GM12878 (cell line): ENCODE measurements at regions of chr6 and their contacts with region 1.

Region 1: GRCh38 chr6:170476360-170476759 is 76.7 kb downstream of the PSMB1 start:
- DNase-seq: peak; percentile 40
- ATAC-seq: peak; percentile 92
- H3K4me3 ChIP-seq: no peak overlapping the region
- H3K27ac ChIP-seq: no peak overlapping the region
- H3K4me1 ChIP-seq: no peaks in the 10 kb centered on the region
- H3K27me3 ChIP-seq: no peaks in the 10 kb centered on the region; a peak in 1 of 4 replicates
- CTCF ChIP-seq: no peak
- EP300 ChIP-seq: peak; percentile 36 to 53; a peak in 2 of 4 replicates
- POLR2A ChIP-seq: no peak
- RAD21 ChIP-seq: no peak

Region 2: DNA sequence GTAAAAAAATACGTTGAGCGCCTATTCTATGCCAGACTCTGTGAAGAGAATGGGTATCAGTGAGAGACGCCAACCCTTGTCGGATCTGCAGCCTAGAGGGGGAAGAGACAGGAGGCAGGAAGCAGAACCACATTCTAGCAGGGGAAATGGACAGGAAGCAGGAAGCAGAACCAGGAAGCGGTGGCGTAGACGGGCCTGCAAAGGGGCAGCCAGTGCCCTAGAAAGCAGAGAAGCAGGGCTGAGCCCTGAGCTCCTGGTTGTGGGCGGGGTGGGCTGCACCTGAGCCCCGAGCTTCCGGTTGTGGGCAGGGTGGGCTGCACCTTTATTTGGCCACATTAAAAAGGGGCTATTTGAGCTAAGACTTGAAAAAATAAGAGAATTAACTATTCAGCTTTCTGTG is 97.9 kb before region 1 on chr6:
- CTCF ChIA-PET with region 1: no interaction called
- POLR2A ChIA-PET with region 1: no interaction called
- RAD21 ChIA-PET with region 1: no interaction called
- SMC1A ChIA-PET with region 1: no interaction called
- in situ Hi-C with region 1: no loop called
- intact Hi-C with region 1: no loop called
- DNase-seq: no peak
- ATAC-seq: no peak
- H3K4me3 ChIP-seq: no peak overlapping the region
- H3K27ac ChIP-seq: no peak overlapping the region
- H3K4me1 ChIP-seq: no peaks in the 10 kb centered on the region
- H3K27me3 ChIP-seq: no peaks in the 10 kb centered on the region
- CTCF ChIP-seq: no peak
- EP300 ChIP-seq: no peak
- POLR2A ChIP-seq: no peak
- RAD21 ChIP-seq: no peak

Region 3: GRCh38 chr6:170443151-170443662 is 33.2 kb before region 1 on chr6:
- CTCF ChIA-PET with region 1: no interaction called
- POLR2A ChIA-PET with region 1: no interaction called
- RAD21 ChIA-PET with region 1: no interaction called
- SMC1A ChIA-PET with region 1: no interaction called
- in situ Hi-C with region 1: no loop called
- intact Hi-C with region 1: no loop called
- DNase-seq: no peak
- ATAC-seq: no peak
- H3K4me3 ChIP-seq: no peak overlapping the region
- H3K27ac ChIP-seq: no peak overlapping the region
- H3K4me1 ChIP-seq: no peaks in the 10 kb centered on the region; the same call in 1 of the 2 replicates
- H3K27me3 ChIP-seq: no peaks in the 10 kb centered on the region
- CTCF ChIP-seq: 0 out of 6 replicates have a peak, but pooled peaks of 1 of the 3 experiments have one; percentile 4
- EP300 ChIP-seq: no peak
- POLR2A ChIP-seq: no peak
- RAD21 ChIP-seq: no peak

Region 4: GRCh38 chr6:170464524-170464979 is 11.8 kb before region 1 on chr6:
- CTCF ChIA-PET with region 1: interaction called, 37 read pairs
- POLR2A ChIA-PET with region 1: interaction called, 20 read pairs
- RAD21 ChIA-PET with region 1: interaction called, 30 read pairs
- SMC1A ChIA-PET with region 1: interaction called, 18 read pairs
- in situ Hi-C with region 1: no loop called
- intact Hi-C with region 1: no loop called
- DNase-seq: peak; percentile 30
- ATAC-seq: peak; percentile 80
- H3K4me3 ChIP-seq: no peak overlapping the region
- H3K27ac ChIP-seq: no peak overlapping the region
- H3K4me1 ChIP-seq: peaks cover 14% of the 10 kb centered on the region
- H3K27me3 ChIP-seq: no peaks in the 10 kb centered on the region
- CTCF ChIP-seq: no peak
- EP300 ChIP-seq: peak; percentile 32 to 51; a peak in 1 of 4 replicates
- POLR2A ChIP-seq: no peak
- RAD21 ChIP-seq: no peak

Region 5: DNA sequence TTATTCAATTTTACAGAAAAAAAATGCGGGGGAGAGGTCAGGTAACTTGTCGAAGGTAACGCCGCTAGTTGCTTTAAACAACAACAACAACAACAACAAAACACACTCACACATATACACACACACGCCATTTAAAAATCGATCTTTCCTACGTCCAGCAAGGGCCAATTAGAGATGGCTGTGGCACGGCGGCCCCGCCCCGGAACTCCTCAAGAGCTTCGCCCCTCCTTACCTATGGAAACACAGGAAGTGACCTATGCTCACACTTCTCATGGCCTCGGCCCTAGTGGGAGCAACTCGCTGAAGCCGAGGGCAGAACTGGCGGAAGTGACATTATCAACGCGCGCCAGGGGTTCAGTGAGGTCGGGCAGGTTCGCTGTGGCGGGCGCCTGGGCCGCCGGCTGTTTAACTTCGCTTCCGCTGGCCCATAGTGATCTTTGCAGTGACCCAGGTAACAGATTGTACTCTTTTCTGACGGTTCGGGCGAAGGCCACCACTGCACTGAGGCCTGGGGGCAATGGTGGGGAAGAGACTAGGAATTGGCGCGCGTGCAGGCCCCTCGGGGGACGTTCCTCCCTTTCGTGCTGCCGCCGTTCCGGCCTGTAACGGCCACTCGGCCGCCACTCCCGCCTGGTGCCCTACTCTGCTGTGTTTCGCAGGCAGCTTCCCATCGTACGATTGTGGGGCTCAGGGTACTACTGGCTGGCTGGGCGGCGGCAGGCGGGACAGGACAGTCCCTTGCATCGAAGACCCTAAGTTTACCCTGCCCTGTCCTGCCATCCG is 77.8 kb after region 1 on chr6 and contains the start of gene TBP:
- CTCF ChIA-PET with region 1: no interaction called
- POLR2A ChIA-PET with region 1: no interaction called
- RAD21 ChIA-PET with region 1: no interaction called
- SMC1A ChIA-PET with region 1: no interaction called
- in situ Hi-C with region 1: no loop called
- intact Hi-C with region 1: no loop called
- DNase-seq: peak; percentile 91
- ATAC-seq: peak; percentile 95
- H3K4me3 ChIP-seq: peak within 1 kb of the TSS; percentile 76
- H3K27ac ChIP-seq: peak within 1 kb of the TSS; percentile 90
- H3K4me1 ChIP-seq: peaks cover 3% of the 10 kb centered on the region; the same call in 1 of the 2 replicates
- H3K27me3 ChIP-seq: no peaks in the 10 kb centered on the region
- CTCF ChIP-seq: no peak
- EP300 ChIP-seq: peak in 1 of 2 experiments; percentile 63; a peak in 1 of 4 replicates
- POLR2A ChIP-seq: peak; percentile 81
- RAD21 ChIP-seq: no peak
- polyA plus RNA-seq, gene TBP: 26.0 to 35.5 TPM